Caco-2 (cell line): ENCODE measurements at regions of chr9 and their contacts with region 1.

Region 1: DNA sequence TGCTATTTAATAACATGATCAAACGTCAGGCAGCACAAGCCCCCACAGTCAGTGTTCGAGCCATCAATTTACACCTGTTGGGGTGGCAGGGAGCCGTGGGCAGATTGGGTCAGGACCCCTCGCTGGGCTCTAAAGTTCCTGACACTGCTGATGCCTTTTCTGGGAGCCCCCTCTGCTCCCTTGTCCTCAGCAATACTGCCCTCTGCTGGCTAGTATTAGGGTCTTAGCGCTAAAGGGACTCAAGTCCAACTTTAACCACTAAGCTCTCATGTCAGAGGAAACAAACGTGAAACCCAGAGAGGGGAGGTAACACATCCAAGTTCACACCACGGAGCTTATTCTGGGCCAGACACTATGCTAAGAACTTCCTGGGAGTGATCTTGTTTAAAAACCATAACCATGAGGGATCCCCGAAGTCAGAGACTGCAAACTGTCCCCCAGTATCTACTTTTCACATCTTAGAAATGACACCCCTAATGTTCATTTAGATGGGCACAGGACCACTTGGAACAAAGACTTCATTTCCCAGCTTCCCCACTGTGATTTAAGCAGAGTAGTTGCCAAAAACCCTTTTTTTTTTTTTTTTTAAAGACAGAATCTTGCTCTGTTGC is 20.4 kb downstream of the ANKS6 start:
- DNase-seq: peak; percentile 61 to 63
- H3K4me3 ChIP-seq: no peak overlapping the region
- H3K4me3 Mint-ChIP-seq: no peak overlapping the region
- H3K27ac Mint-ChIP-seq: no peak overlapping the region
- H3K4me1 ChIP-seq: peaks cover 43% of the 10 kb centered on the region
- H3K4me1 Mint-ChIP-seq: peaks cover 21% of the 10 kb centered on the region
- H3K27me3 ChIP-seq: no peaks in the 10 kb centered on the region
- H3K27me3 Mint-ChIP-seq: no peaks in the 10 kb centered on the region
- CTCF ChIP-seq: peak; percentile 76 to 79

Region 2: GRCh38 chr9:98549401-98549800 is 226.5 kb before region 1 on chr9:
- CTCF ChIA-PET with region 1: no interaction called
- POLR2A ChIA-PET with region 1: no interaction called
- intact Hi-C with region 1: loop called (anchors 5 kb)
- DNase-seq: no peak
- H3K4me3 ChIP-seq: no peak overlapping the region
- H3K4me3 Mint-ChIP-seq: no peak overlapping the region
- H3K27ac Mint-ChIP-seq: no peak overlapping the region
- H3K4me1 ChIP-seq: peaks cover 8% of the 10 kb centered on the region
- H3K4me1 Mint-ChIP-seq: peaks cover 7% of the 10 kb centered on the region
- H3K27me3 ChIP-seq: no peaks in the 10 kb centered on the region
- H3K27me3 Mint-ChIP-seq: no peaks in the 10 kb centered on the region
- CTCF ChIP-seq: no peak